OCI-LY7 (cell line): ENCODE measurements at regions of chr1 and their contacts with region 1.

Region 1: DNA sequence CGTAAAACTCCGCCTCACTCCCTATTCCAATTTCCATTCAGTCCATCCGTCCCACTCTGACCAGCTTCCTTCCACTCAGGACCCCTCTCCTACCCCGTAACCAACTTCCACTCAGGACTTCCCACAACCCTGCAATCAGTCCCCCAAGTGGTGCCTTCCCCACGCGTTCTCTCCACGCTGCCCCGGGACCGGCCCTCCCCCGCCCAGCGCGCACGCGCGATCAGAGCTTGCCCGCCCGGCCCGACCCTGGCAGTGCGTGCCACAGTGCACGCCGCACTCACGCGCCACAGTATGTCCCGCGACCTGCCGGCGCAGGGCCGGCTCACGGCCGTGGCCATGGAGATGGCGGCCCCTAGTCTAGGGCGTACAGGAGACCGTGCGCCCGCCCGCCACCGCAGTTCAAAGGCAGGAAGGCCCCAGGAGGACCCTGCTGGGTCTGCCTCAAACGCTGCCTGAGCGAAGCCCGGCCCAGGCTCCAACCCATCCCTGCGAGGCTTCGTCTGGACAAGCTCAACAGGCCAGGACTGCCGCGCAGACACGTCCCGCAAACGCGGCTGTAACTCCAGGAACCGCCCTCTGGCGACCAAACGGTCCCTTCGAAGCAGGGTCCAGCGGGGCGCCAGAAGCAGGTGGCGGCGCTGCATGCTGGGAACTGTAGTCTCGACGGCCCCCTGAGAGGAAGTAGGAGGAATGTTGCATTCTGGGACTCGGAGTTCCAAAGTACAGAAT is at the start of gene NDC1:
- DNase-seq: peak; percentile 96
- H3K4me3 ChIP-seq: peak within 1 kb of the TSS; percentile 83
- H3K27ac ChIP-seq: peak within 1 kb of the TSS; percentile 83
- H3K4me1 ChIP-seq: peaks cover 32% of the 10 kb centered on the region
- CTCF ChIP-seq: peak; percentile 23; the same call in 1 of the 2 replicates
- total RNA-seq, gene NDC1: 40.0 and 51.8 TPM in 2 replicates

Region 2: DNA sequence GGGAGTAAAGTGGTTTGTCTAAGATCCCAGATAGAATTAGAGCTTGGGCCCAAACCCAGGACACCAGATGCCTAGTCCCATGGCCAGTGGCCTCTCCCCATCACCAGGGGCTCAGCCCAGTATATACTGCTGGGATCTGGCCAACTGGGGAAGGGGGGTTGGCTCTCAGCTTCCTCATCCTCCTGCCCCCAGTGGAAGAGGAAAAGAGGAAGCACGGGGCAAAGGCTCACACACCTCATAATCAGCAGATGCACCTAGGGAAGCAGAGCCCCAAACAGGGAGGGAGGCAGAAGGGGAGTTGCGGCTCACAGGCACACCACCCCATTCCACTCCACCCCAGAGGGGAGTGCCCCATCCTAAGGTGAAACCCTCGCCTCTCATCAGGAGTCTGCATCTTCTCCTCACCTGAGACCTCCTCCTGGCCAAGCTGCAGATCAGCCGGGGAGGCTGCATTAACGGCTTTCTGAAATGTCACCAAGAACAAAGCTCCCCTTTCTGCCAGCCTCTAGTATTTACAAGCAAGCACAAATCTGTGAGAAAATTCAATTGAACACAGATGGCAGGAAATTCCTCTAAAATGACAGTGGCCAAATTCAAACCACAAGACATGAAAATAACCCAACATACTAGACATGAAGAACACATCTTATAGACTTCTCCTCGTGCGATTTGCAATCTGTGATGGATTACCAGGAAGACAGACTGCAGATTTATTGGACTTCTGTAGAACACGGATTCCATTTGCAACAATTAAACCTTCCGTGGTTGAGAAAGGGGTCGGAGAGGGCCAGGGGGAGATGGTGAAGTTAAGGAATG is 181.9 kb before region 1 on chr1:
- CTCF ChIA-PET with region 1: no interaction called
- POLR2A ChIA-PET with region 1: no interaction called
- intact Hi-C with region 1: no loop called
- DNase-seq: no peak
- H3K4me3 ChIP-seq: no peak overlapping the region
- H3K27ac ChIP-seq: no peak overlapping the region
- H3K4me1 ChIP-seq: no peaks in the 10 kb centered on the region
- CTCF ChIP-seq: no peak

Region 3: GRCh38 chr1:53678507-53678906 is 159.6 kb before region 1 on chr1:
- CTCF ChIA-PET with region 1: no interaction called
- POLR2A ChIA-PET with region 1: no interaction called
- intact Hi-C with region 1: no loop called
- DNase-seq: no peak
- H3K4me3 ChIP-seq: no peak overlapping the region
- H3K27ac ChIP-seq: no peak overlapping the region
- H3K4me1 ChIP-seq: no peaks in the 10 kb centered on the region
- CTCF ChIP-seq: no peak

Region 4: DNA sequence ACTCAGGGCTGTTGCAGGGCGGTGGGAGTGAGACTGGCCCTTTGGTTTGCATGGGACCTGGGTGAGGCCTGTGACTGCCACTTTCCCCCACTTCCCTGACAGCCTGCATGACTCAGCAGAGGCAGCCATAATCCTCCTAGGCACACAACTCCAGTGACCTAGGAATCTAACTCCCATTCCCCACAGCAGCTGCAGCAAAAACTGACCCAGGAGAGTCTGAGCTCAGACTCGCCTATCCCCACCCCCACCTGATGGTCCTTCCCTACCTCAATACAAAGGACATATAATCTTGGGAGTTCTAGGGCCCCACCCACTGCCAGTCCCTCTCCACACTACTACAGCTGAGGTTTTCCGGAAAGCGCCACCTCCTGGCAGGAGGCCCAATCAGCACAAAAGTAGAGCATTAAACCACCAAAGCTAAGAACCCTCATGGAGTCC is 26.7 kb before region 1 on chr1:
- CTCF ChIA-PET with region 1: no interaction called
- POLR2A ChIA-PET with region 1: no interaction called
- intact Hi-C with region 1: no loop called
- DNase-seq: no peak
- H3K4me3 ChIP-seq: no peak overlapping the region
- H3K27ac ChIP-seq: no peak overlapping the region
- H3K4me1 ChIP-seq: no peaks in the 10 kb centered on the region
- CTCF ChIP-seq: peak; percentile 66

Region 5: DNA sequence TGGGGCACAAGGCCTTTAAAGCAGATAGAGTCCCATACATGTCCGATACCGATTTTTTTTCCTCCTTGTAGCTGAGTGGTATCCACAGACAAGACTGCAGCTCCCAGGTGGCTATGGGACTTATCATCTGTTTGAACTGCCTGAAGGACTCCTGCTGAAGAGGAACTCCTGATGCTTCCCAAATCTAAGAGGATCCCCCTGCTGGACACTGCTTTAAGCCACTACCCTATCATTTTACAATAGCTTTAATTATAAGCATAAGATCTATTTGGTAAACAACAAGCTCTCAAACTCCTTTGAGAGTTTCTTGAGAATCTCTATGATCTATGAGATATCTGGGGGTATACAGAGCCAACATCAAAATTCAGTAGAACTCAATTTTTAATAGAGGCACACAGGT is 11.7 kb before region 1 on chr1:
- CTCF ChIA-PET with region 1: interaction called, 3 read pairs
- POLR2A ChIA-PET with region 1: interaction called, 23 read pairs
- intact Hi-C with region 1: no loop called
- DNase-seq: no peak
- H3K4me3 ChIP-seq: no peak overlapping the region
- H3K27ac ChIP-seq: peak overlapping the region; percentile 44
- H3K4me1 ChIP-seq: peaks cover 34% of the 10 kb centered on the region
- CTCF ChIP-seq: peak; percentile 61